ENCODE measurements at regions of chr2 and their contacts with region 1.

Region 1: GRCh38 chr2:10103179-10103732 is 19.3 kb upstream of the RRM2 start:
- DNase-seq: no peak
- H3K4me3 ChIP-seq: no peak overlapping the region
- H3K27ac ChIP-seq: no peak overlapping the region
- H3K4me1 ChIP-seq: no peaks in the 10 kb centered on the region
- H3K27me3 ChIP-seq: no peaks in the 10 kb centered on the region
- CTCF ChIP-seq: no peak

Region 2: DNA sequence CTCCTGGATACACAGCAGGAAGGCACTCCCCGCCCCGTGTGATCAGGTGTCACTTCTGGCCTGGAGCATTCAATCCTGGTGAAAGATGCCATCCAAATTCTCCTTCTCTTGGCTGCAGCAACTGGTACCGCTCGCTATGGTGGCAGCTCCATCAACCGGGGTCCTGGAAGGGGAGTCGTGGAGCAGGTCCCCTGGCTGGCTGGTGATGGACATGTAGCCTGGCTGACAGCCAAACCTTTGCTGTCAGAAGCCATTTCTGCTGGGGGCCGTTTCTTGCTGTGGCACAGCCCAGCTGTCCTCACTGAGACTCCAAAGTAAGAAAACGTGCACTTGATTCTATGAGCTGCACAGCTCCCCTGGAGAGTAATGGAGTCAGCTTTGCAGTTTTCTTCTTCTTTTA is 15.9 kb before region 1 on chr2:
- CTCF ChIA-PET with region 1: interaction called, 11 read pairs
- POLR2A ChIA-PET with region 1: no interaction called
- intact Hi-C with region 1: no loop called
- DNase-seq: no peak
- H3K4me3 ChIP-seq: no peak overlapping the region
- H3K27ac ChIP-seq: no peak overlapping the region
- H3K4me1 ChIP-seq: no peaks in the 10 kb centered on the region
- H3K27me3 ChIP-seq: peaks cover 27% of the 10 kb centered on the region
- CTCF ChIP-seq: no peak

Measured in A673 (cell line).